H1 (cell line): ENCODE measurements at regions of chr3 and their contacts with region 1.

Region 1: DNA sequence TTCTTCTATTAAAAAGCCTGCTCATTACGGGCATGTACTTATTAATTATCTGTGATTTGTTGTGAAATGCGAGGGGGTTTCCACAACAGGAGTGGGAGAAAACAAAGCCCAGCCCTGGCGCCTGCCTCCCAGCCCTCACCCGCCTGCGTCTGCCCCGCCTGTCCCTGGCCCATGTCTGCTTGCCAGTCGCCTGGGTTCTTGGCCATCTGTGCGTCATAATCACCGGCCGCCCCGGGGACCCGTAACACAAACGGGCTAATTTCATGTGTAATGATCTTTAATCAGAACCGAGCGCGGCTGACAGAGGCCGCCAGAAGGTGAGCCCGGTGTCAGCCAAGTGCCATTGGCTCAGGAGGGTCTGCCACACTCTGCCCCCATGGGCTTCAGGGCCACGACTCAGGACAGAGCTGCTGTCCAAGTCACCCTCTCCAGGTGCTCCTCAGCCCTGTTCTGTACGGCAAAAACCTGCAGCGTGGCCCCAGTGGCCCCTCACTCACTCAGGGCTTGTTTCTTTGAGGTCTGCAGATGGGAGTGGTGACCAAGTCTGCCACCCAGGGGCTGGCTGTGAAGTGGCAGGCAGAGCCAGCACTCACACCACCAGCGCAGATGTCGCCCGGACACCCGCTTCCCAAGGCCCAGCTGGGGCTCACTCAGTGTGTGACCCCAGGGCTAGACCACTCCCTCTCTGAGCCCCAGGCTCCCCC is 28.8 kb upstream of the TMEM115 start:
- DNase-seq: peak in 1 of 2 experiments; percentile 67
- H3K4me3 ChIP-seq: no peak overlapping the region
- H3K27ac ChIP-seq: no peak overlapping the region
- H3K4me1 ChIP-seq: peaks cover 0 to 2% (median under 1%) of the 10 kb centered on the region in 4 experiments; a peak in 3 of 7 replicates
- H3K27me3 ChIP-seq: peaks cover 0 to 3% (median 0%) of the 10 kb centered on the region in 4 experiments; a peak in 1 of 7 replicates
- CTCF ChIP-seq: peak in 2 of 3 experiments; percentile 72 to 77; a peak in 3 of 4 replicates
- EP300 ChIP-seq: no peak
- POLR2A ChIP-seq: no peak
- RAD21 ChIP-seq: peak; percentile 65 to 70

Region 2: DNA sequence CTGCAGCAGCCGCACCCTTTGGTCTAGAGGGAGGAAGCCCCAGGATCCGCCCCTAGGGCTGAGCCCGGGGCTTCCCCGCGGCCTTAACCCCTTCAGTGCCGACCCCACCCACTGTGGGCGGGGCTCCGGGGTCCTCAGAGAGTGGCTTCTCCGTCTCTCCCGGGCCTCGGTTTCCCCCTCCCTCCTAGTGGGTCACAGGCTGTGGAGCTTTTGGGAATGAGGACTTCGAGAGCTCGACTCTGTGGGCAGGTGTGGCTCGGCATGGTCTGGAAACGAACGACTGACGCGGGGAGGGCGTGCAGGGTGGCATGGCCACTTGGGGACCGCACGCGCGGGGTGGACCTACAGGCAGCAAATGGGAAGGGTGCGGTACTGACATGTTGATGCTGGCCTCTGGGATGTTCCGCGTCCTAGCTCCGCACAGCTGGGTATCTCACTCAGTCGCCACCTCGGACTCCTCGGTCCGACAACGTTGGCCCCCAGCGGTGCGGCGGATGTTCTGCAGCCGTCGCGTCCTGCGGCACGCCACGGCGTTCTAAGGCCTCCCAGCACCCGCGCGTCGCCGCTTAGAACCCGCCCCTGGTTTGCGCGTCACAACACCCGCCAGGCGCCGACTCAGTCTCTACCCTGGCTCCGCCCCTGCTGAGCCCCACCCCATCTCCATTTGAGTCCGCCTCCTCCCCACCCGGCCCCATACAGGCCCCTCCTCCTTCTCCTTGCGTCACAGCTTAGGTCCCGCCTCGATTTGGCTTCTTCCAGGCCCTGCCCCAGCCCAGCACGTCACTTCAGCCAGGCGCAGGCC is 89.1 kb before region 1 on chr3 and contains the starts of genes HYAL3 and NAA80:
- CTCF ChIA-PET with region 1: no interaction called
- POLR2A ChIA-PET with region 1: no interaction called
- DNase-seq: peak; percentile 99
- H3K4me3 ChIP-seq: peak within 1 kb of the TSS; percentile 70 to 89 (median 80)
- H3K27ac ChIP-seq: peak within 1 kb of the TSS; percentile 61
- H3K4me1 ChIP-seq: peaks cover 0 to 26% (median 12%) of the 10 kb centered on the region in 4 experiments; a peak in 6 of 7 replicates
- H3K27me3 ChIP-seq: no peaks in the 10 kb centered on the region; a peak in 1 of 7 replicates
- CTCF ChIP-seq: peak in 1 of 3 experiments; percentile 8; a peak in 1 of 4 replicates
- EP300 ChIP-seq: no peak
- POLR2A ChIP-seq: peak in 1 of 2 experiments; percentile 66; a peak in 1 of 3 replicates
- RAD21 ChIP-seq: no peak
- total RNA-seq, gene HYAL3: 3.2 and 4.9 TPM in 2 replicates
- total RNA-seq, gene NAA80: 10.1 and 11.3 TPM in 2 replicates

Region 3: DNA sequence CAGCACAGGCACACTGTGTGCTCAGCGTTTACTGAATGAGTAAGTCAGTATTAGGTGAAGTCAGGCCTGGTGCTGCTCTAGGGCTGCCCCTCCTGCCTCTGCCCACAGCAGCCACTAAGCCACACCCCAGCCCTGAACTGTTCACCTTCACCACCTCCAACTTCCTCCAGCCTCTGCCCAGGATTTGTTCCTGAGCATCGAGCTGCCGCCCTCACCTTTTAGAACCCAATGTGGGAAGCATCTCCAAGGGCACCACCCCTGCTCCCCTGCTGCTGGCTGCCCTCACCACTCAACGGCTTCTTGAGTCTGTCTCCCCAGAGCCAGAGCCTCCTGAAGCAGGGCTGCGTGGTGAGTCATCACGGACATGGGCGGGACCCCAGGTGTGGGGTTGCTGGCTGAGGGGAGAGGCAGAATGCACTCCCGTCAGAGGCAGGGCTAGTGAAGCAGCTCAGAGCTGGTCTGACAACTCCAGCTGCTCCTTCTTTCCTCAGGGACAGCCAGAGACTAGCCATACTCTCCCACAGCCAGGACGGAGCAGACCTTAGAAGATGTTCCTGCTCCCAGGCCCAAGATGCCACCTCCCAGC is 71.4 kb before region 1 on chr3:
- CTCF ChIA-PET with region 1: no interaction called
- POLR2A ChIA-PET with region 1: no interaction called
- DNase-seq: no peak
- H3K4me3 ChIP-seq: no peak overlapping the region; a peak in 1 of 8 replicates
- H3K27ac ChIP-seq: no peak overlapping the region
- H3K4me1 ChIP-seq: peaks cover 0 to 12% (median 9%) of the 10 kb centered on the region in 4 experiments; a peak in 6 of 7 replicates
- H3K27me3 ChIP-seq: no peaks in the 10 kb centered on the region
- CTCF ChIP-seq: no peak
- EP300 ChIP-seq: no peak
- POLR2A ChIP-seq: no peak
- RAD21 ChIP-seq: no peak

Region 4: DNA sequence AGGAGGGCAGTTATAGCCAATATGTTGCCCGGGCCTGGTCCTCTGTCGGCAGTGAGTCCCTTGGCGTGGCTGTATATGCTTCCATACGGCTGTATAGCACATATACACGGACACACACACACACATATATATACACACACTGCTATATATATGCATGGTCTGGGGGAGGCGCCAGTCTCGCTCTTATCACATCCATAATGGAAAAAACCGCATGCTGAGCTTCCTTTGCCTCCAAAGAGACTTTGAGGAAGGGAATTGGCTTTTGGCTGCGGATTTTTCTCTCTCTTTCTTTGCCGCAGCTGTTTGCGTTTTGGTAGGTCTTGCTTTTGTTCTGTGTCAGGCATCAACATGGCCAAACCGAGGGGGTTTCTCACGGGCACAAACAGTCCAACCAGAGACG is 17.6 kb before region 1 on chr3:
- CTCF ChIA-PET with region 1: interaction called, 43 read pairs
- POLR2A ChIA-PET with region 1: interaction called, 5 read pairs
- DNase-seq: no peak
- H3K4me3 ChIP-seq: no peak overlapping the region
- H3K27ac ChIP-seq: no peak overlapping the region
- H3K4me1 ChIP-seq: peaks cover 0 to 32% (median 23%) of the 10 kb centered on the region in 4 experiments; a peak in 6 of 7 replicates
- H3K27me3 ChIP-seq: no peaks in the 10 kb centered on the region; a peak in 2 of 7 replicates
- CTCF ChIP-seq: peak in 1 of 3 experiments; percentile 34; a peak in 1 of 4 replicates
- EP300 ChIP-seq: no peak
- POLR2A ChIP-seq: no peak
- RAD21 ChIP-seq: peak; percentile 41 to 44; a peak in 3 of 4 replicates

Region 5: GRCh38 chr3:50418850-50419249 is 30.7 kb after region 1 on chr3:
- CTCF ChIA-PET with region 1: interaction called, 19 read pairs
- POLR2A ChIA-PET with region 1: no interaction called
- DNase-seq: no peak
- H3K4me3 ChIP-seq: no peak overlapping the region
- H3K27ac ChIP-seq: no peak overlapping the region
- H3K4me1 ChIP-seq: peaks cover 0 to 2% (median 0%) of the 10 kb centered on the region in 4 experiments; a peak in 1 of 7 replicates
- H3K27me3 ChIP-seq: no peaks in the 10 kb centered on the region; a peak in 1 of 7 replicates
- CTCF ChIP-seq: no peak
- EP300 ChIP-seq: no peak
- POLR2A ChIP-seq: no peak
- RAD21 ChIP-seq: no peak